ENCODE measurements at regions of chr17 and their contacts with region 1.

Region 1: GRCh38 chr17:19648475-19649406 is at the start of gene ALDH3A2:
- DNase-seq: peak; percentile 89
- ATAC-seq: peak; percentile 83
- H3K4me3 Mint-ChIP-seq: peak within 1 kb of the TSS; percentile 92
- H3K27ac Mint-ChIP-seq: peak within 1 kb of the TSS; percentile 84
- H3K4me1 Mint-ChIP-seq: peaks cover 58% of the 10 kb centered on the region
- H3K27me3 Mint-ChIP-seq: peaks cover 8% of the 10 kb centered on the region
- CTCF ChIP-seq: no peak
- total RNA-seq, gene ALDH3A2: 68.5 to 84.3 TPM (median 80.6 TPM) in 3 replicates

Region 2: DNA sequence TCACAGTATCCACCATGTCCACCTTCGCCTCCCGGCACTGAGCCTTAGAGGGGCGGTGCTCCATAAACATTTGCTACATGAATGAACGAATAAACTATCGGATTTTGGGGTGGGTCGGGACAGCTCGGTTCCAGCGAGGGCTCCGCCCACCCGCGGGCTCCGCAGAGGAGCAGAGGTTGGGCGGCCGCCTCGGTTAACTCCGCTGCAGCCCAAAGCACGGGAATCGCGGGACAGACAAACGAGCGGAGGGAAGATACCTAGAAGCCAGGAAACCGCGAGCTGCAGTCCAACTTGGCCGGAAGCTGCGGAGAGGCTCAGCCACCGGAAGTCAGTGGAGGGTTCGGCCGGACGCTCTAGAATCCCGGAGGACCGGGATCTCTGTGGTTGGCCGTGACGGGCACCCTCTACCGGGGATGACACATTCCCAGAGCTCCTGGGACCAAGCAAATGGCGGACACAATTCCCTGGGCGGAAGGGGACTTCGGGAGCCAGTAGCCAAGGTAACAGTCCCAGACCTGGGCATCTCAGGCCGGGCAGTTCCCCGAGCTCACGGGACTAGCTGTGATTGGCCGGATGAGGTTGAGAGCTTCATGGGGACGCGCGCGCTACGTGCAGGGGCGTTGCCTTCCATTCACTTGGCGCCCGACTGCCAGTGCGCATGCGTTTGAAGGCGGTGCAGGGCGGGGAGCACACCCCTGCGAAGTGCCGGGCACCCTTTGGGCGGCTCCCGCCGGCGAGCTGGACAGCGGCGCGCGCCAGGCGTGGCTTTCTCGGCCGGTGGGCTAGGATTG is 270.9 kb before region 1 on chr17:
- CTCF ChIA-PET with region 1: interaction called, 5 read pairs
- POLR2A ChIA-PET with region 1: interaction called, 14 read pairs
- DNase-seq: peak; percentile 99
- ATAC-seq: peak; percentile 93
- H3K4me3 Mint-ChIP-seq: peak overlapping the region; percentile 99
- H3K27ac Mint-ChIP-seq: peak overlapping the region; percentile 97
- H3K4me1 Mint-ChIP-seq: peaks cover 16% of the 10 kb centered on the region
- H3K27me3 Mint-ChIP-seq: no peaks in the 10 kb centered on the region
- CTCF ChIP-seq: no peak

Region 3: GRCh38 chr17:19502517-19502916 is 146.2 kb before region 1 on chr17:
- CTCF ChIA-PET with region 1: no interaction called
- POLR2A ChIA-PET with region 1: no interaction called
- DNase-seq: no peak
- ATAC-seq: no peak
- H3K4me3 Mint-ChIP-seq: no peak overlapping the region
- H3K27ac Mint-ChIP-seq: no peak overlapping the region
- H3K4me1 Mint-ChIP-seq: peaks cover 12% of the 10 kb centered on the region
- H3K27me3 Mint-ChIP-seq: no peaks in the 10 kb centered on the region; the same call in 1 of the 2 replicates
- CTCF ChIP-seq: no peak

Region 4: DNA sequence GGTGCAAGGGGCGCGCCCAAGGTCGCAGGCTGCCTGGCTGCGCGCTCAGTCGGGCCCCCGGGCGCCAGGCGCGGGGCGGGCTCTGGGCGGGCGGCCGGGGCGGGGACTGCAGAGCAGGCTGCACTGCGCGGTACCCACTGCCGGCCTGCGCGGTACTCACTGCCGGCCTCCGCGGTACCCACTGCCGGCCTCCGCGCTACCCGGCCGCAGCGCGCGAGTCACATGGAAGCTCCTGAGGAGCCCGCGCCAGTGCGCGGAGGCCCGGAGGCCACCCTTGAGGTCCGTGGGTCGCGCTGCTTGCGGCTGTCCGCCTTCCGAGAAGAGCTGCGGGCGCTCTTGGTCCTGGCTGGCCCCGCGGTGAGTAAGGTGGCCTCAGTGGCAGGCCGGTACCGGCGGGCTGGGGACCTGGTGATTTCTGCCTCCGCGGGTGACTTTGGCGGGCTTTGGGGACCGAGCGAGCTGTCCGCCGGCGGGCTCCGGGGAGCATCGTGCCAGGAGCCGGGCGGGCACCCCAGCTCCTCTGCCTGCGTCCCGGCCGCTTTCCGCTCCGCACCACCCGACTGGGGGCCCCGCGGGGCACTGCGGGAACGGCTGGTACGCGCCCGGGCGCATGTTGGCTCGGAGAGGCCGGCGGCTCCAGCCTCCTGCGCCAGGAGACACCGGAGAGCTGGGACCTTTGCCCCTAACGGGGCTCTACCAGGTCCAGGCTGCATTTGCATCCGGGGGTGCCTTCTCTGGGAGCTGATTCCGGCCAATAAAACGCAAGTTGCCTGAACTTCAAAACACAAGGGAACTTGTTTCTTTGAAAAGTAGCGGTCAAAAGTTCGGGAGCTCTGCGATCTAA is 114.8 kb before region 1 on chr17 and contains the start of gene SLC47A1:
- CTCF ChIA-PET with region 1: interaction called, 13 read pairs
- POLR2A ChIA-PET with region 1: interaction called, 3 read pairs
- DNase-seq: peak; percentile 42
- ATAC-seq: peak; percentile 83
- H3K4me3 Mint-ChIP-seq: peak within 1 kb of the TSS; percentile 71
- H3K27ac Mint-ChIP-seq: no peak within 1 kb of the TSS
- H3K4me1 Mint-ChIP-seq: peaks cover 35% of the 10 kb centered on the region
- H3K27me3 Mint-ChIP-seq: peaks cover 43% of the 10 kb centered on the region
- CTCF ChIP-seq: no peak
- total RNA-seq, gene SLC47A1: 2.5 to 3.3 TPM (median 2.9 TPM) in 3 replicates

Region 5: GRCh38 chr17:19579867-19580565 is 68.7 kb before region 1 on chr17:
- CTCF ChIA-PET with region 1: interaction called, 11 read pairs
- POLR2A ChIA-PET with region 1: interaction called, 3 read pairs
- DNase-seq: peak; percentile 30
- ATAC-seq: peak; percentile 60
- H3K4me3 Mint-ChIP-seq: peak overlapping the region; percentile 78
- H3K27ac Mint-ChIP-seq: no peak overlapping the region
- H3K4me1 Mint-ChIP-seq: peaks cover 22% of the 10 kb centered on the region
- H3K27me3 Mint-ChIP-seq: peaks cover 34% of the 10 kb centered on the region
- CTCF ChIP-seq: no peak

Region 6: DNA sequence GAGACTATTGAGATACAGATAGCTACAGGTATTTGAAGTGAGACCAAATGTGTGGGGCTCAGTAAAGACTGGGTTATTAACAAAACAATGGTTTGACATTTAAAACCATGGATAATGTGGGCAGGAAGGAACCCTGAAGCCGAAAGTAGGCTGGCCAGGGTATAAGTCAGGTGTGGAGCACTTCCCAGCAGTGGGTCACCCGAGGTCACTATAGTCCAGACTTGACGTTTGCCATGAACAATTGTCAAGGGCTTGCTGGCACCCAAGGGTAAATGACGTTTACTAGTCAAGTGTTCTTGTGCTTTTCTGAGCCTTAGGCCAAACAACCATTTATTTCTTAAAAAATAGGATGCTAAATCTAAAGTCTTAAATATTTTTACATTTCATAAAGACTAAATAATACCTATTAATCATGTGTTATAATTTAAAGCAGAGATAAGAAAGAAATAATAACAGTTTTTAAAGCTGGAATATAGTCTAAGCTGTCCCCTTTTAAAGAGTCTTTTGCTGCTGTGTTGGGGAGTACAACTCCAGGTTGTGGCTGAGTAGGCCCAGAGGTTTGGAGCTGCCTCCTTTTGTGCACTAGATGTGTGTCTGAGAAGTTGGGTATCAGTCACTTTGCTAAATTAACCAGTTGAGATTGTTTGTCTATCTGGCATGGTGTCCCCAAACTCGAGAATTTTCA is 15.5 kb after region 1 on chr17:
- CTCF ChIA-PET with region 1: interaction called, 10 read pairs
- POLR2A ChIA-PET with region 1: interaction called, 5 read pairs
- DNase-seq: no peak
- ATAC-seq: no peak
- H3K4me3 Mint-ChIP-seq: no peak overlapping the region
- H3K27ac Mint-ChIP-seq: no peak overlapping the region
- H3K4me1 Mint-ChIP-seq: peaks cover 21% of the 10 kb centered on the region
- H3K27me3 Mint-ChIP-seq: no peaks in the 10 kb centered on the region
- CTCF ChIP-seq: no peak

Region 7: DNA sequence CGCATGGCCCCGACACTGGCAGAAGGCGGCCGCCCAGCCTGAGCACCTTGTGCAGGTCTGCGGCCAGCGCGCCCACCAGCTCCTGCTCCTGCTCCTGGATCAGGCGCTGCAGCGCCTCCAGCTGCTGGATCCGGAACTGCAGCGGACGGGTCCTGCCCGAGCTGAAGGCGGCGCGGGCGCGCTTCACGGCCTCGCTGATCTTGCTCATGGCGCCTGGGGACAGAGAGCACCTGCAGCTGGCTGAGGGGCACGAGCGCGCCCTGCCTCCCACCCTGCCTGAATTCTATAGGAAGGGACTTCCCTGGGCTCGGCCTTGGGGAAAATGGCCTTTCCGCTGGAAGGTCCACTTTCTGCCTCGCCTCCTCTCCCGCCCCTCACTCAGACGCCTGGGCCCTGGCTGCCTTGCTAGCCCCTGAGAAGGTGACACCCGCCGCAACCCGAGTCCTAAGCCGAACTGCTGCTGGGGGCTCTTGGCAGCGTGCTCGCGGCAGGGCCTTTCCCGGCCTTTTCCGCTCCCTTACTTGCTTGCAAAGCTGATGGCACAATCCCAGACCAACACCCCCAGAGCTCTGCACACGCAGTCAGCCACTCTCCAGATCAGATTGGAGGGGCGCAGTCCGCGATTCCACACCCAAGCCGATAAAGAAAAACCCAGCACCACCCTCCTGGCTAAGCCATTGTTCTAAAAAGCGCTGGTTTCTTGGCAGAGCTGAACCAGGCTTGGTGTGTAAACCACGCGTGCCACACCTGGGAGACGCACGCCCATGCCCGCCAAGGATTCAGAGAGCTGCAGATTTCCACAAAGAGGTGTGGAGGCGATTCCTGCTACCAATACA is 96.4 kb after region 1 on chr17:
- CTCF ChIA-PET with region 1: interaction called, 24 read pairs
- POLR2A ChIA-PET with region 1: interaction called, 6 read pairs
- DNase-seq: peak; percentile 99
- ATAC-seq: peak; percentile 92
- H3K4me3 Mint-ChIP-seq: peak overlapping the region; percentile 54
- H3K27ac Mint-ChIP-seq: no peak overlapping the region
- H3K4me1 Mint-ChIP-seq: peaks cover 22% of the 10 kb centered on the region
- H3K27me3 Mint-ChIP-seq: peaks cover 13% of the 10 kb centered on the region; the same call in 1 of the 2 replicates
- CTCF ChIP-seq: peak; percentile 97